Heart left ventricle (tissue), 16 donors: ENCODE measurements at regions of chr15 and their contacts with region 1.

Region 1: DNA sequence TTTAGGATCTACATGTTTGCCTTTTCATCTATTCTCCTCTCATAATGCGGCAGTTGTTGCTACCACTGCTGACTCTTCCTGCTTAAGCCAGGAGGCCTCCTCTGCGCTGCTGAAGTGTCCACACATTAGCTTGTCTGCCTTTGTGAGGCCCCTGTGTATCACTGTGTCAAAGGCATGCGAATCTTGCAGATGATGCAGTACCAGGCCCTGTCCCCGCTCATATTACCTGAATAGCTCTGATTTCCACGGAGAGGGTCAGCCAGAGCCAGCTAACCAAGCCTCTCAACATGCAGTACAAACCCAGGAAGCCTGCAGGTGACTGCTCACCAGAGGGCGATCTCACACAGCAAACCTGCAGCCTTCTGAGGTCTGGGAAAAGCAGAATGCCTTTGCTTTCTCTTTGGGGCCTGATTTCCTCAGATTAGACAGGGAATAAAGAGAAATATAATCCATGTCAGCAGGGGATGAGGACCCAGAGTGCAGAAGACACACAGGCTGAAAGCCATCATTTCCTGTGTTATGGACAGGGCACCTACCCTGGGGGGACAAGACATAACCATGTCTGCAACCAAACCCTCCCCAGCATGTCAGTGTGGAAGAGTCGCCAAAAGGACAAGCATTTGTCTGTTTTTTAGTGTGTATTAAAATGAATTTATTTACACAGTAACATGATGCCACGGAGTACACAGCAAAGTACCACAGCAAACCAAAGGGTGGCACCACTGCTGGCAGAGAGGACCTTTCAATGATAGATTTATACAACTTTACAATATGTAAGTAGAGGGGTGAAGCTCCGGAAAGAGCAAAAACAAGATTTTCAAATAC is 36.8 kb upstream of the TSPAN3 start:
- DNase-seq: peak in 4 of 5 donors; percentile 43 to 56 (median 49)
- ATAC-seq: peak; percentile 55 to 71 (median 70)
- H3K4me3 ChIP-seq: no peak overlapping the region
- H3K27ac ChIP-seq: peak overlapping the region in 9 of 12 donors; percentile 45 to 67 (median 58)
- H3K4me1 ChIP-seq: peaks cover 0 to 60% (median 36%) of the 10 kb centered on the region in 12 donors
- H3K27me3 ChIP-seq: no peaks in the 10 kb centered on the region
- CTCF ChIP-seq: peak; percentile 44 to 78 (median 61)
- POLR2A ChIP-seq: no peak

Region 2: DNA sequence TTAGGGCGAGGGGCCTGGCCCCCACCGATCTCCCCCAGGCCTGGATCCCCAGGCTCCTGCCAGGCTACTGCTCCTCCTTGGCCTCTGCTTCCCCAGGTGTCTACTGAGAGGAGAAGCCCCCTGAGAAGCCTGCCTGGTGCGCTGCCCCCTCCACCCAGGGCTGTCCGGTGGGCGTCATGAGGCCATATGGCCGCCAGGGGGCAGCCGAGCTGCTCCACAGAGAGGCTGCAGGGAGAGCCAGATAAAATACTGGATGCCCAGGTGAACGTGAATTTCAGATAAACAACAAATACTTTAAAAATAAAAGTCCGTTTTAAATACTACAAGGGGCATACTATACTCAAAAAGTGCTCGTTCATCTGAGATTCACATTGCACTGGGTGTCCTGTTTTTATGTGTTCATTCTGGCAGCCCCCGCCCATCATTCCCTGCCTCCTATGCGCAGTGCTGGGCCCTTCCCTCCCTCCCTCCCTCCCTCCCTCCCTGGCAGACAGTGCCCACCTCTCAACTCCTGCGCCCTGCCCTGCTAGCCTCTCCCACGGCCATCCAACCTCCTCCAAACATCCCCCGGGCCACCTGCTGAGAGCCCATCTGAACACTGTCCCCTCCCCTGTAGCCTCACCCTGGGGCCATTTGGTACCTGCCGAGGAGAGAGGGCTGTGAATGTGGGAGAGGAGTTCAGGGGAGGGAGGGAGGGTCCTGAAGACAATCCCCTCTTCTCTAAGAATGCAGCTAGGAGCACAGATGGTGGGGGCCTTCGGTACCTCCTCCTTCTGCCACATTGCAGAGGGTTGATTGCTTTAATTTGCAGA is 83.3 kb before region 1 on chr15:
- intact Hi-C with region 1: loop called in 1 of 10 experiments (anchors 5 kb)
- DNase-seq: peak; percentile 60 to 84 (median 69)
- ATAC-seq: peak; percentile 22 to 48 (median 40)
- H3K4me3 ChIP-seq: no peak overlapping the region
- H3K27ac ChIP-seq: peak overlapping the region in 1 of 12 donors; percentile 42
- H3K4me1 ChIP-seq: peaks cover 0 to 41% (median 19%) of the 10 kb centered on the region in 12 donors
- H3K27me3 ChIP-seq: no peaks in the 10 kb centered on the region
- CTCF ChIP-seq: peak; percentile 92 to 98 (median 96)
- POLR2A ChIP-seq: no peak

Region 3: DNA sequence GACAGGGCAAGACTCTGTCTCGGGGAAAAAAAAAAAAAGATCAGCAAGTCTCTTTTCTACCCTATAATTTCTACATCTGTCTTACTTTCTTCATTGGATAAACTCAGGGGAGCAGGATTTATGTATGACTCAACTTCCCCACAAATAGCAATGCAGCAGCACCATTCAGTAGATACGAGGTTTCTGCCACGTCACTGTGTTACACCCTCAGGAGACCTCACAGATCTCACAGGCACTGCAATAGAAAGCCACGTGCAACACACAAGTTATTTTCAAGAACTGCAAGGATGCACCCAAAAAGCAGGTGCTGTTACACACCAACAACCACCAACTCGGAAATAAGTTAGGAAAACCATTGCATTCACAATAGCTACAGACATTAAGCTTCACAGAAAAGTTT is 67.1 kb before region 1 on chr15:
- intact Hi-C with region 1: no loop called
- DNase-seq: no peak
- ATAC-seq: no peak
- H3K4me3 ChIP-seq: no peak overlapping the region
- H3K27ac ChIP-seq: no peak overlapping the region
- H3K4me1 ChIP-seq: peaks cover 0 to 38% (median 11%) of the 10 kb centered on the region in 12 donors
- H3K27me3 ChIP-seq: no peaks in the 10 kb centered on the region
- CTCF ChIP-seq: no peak
- POLR2A ChIP-seq: no peak

Region 4: DNA sequence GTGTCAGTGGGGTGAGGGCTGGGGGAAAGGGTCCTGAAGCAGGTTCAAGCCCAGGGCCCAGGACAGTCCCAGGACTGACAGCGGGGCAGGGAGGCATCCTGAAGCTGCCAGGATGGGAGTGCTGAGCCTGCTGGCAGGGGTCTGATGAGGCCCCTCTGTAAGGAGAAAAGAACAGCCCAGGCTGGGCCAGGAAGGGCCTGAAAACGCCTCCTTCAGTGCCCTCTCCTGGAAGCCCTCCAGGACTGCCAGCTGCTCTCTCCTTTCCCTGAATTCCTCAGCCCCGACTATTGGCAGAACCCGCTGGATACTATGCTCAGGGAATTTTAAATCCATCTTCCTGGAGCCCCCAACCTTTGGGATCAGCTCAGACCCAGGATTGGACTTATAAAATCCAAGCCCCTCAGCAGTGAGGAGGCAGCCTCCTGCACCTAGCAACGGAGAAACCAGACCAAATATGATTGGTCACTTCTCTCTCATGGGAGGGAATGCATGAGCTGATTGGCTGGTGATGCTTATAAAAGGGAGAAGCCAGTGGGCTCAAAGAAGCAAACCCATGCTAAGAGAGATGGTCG is 728.5 kb after region 1 on chr15:
- intact Hi-C with region 1: loop called in 1 of 10 experiments (anchors 10 kb)
- DNase-seq: peak in 1 of 5 donors; percentile 30
- ATAC-seq: no peak
- H3K4me3 ChIP-seq: no peak overlapping the region
- H3K27ac ChIP-seq: no peak overlapping the region
- H3K4me1 ChIP-seq: no peaks in the 10 kb centered on the region
- H3K27me3 ChIP-seq: peaks cover 0 to 23% (median 3%) of the 10 kb centered on the region in 9 donors
- CTCF ChIP-seq: no peak
- POLR2A ChIP-seq: no peak